Mucosa of descending colon (tissue), 3 donors: ENCODE measurements at regions of chr20 and their contacts with region 1.

Region 1: GRCh38 chr20:44398303-44398702 is 42.8 kb downstream of the HNF4A start:
- DNase-seq: no peak
- ATAC-seq: peak; percentile 51
- H3K4me3 ChIP-seq: no peak overlapping the region
- H3K4me1 ChIP-seq: peaks cover 19% of the 10 kb centered on the region
- CTCF ChIP-seq: no peak

Region 2: DNA sequence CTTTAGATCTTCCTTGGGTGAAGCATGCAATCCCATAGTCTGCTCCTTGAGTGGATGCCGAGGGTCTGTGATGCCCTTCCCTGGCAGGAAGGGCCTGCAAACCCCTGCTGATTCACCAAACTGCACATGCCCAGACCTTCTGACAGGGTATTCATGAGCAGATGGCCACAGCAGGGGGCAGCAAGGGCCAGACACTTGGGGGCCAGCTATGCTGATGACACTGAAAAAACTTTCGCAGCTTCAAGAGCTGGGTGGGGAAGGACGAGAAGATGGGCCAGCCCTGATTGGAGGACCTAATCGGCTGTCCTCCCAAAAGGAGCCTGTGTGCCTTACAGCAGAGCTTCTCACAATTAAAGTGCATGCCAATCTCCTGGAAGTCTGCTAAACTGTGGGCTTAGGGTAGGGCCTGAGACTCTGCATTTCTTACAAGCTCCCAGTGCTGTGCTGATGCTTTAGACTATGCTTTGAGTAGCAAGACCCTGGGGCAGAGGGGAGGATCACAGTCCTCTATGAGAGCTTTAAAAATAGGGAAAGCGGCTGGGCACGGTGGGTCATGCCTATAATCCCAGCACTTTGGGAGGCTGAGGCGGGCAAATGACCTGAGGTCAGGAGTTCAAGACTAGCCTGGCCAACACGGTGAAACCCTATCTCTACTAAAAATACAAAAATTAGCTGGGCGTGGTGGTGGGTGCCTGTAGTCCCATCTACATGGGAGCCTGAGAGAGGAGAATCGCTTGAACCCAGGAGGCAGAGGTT is 166.4 kb before region 1 on chr20:
- intact Hi-C with region 1: no loop called
- DNase-seq: no peak
- ATAC-seq: no peak
- H3K4me3 ChIP-seq: no peak overlapping the region
- H3K4me1 ChIP-seq: no peaks in the 10 kb centered on the region
- CTCF ChIP-seq: no peak

Region 3: DNA sequence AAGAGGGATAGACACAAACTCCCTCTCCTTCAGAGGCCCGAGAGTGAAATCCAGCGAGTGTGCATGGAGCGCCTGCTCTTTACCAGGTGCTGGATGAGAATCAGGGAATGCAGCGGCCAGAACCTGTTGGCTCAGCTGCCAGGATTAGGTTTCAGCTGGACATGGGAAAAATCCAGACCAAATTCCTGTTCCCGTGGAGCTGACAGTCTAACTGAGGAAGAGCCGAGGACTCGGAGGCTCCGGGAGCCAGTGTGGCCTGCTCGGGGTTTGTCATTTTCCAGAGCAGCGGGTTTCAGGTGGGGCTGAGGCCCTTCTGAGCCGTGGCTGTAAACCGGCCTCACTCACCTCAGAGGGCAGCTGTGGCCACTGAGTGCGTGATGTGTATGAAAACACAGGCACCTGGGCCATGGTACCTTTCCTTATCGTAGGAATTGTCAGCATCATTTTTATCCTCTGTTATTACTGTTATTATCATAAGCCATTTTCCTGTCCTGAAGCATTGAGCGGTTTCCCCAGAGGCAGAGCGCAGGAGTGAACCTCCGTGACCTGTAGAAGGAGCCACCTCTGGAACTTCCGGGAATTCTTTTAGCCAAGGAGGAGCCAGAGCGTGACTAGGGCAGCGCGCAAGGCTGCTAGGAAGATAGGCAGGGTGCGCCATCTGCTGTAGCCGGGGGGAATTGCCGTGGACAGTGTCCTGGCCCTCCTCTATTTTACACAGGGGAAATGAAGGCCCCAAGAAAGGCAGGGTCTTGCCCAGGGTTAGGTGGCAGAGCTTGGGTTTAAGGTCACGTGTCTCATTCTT is 211.4 kb after region 1 on chr20:
- intact Hi-C with region 1: loop called in 1 of 2 experiments (anchors 10 kb)
- DNase-seq: peak; percentile 90 to 96 (median 93)
- ATAC-seq: peak; percentile 97
- H3K4me3 ChIP-seq: no peak overlapping the region
- H3K4me1 ChIP-seq: peaks cover 19% of the 10 kb centered on the region
- CTCF ChIP-seq: peak; percentile 93